Mucosa of descending colon (tissue), 3 donors: ENCODE measurements at regions of chr6 and their contacts with region 1.

Region 1: GRCh38 chr6:36685936-36686667 is 7.6 kb downstream of the CDKN1A start:
- DNase-seq: no peak
- ATAC-seq: no peak
- H3K4me3 ChIP-seq: no peak overlapping the region
- H3K4me1 ChIP-seq: peaks cover 24% of the 10 kb centered on the region
- CTCF ChIP-seq: no peak

Region 2: GRCh38 chr6:36623547-36624459 is 62.3 kb before region 1 on chr6:
- intact Hi-C with region 1: loop called (anchors 2 kb)
- DNase-seq: peak; percentile 88 to 97 (median 94)
- ATAC-seq: peak; percentile 89
- H3K4me3 ChIP-seq: no peak overlapping the region
- H3K4me1 ChIP-seq: peaks cover 40% of the 10 kb centered on the region
- CTCF ChIP-seq: peak; percentile 89

Region 3: GRCh38 chr6:36793913-36794712 is 108.0 kb after region 1 on chr6:
- intact Hi-C with region 1: no loop called
- DNase-seq: no peak
- ATAC-seq: peak; percentile 23
- H3K4me3 ChIP-seq: no peak overlapping the region
- H3K4me1 ChIP-seq: no peaks in the 10 kb centered on the region
- CTCF ChIP-seq: no peak

Region 4: GRCh38 chr6:36809941-36810803 is 124.1 kb after region 1 on chr6:
- intact Hi-C with region 1: no loop called
- DNase-seq: no peak
- ATAC-seq: no peak
- H3K4me3 ChIP-seq: no peak overlapping the region
- H3K4me1 ChIP-seq: no peaks in the 10 kb centered on the region
- CTCF ChIP-seq: no peak